CD8-positive, alpha-beta T cell (primary cell): ENCODE measurements at regions of chr3 and their contacts with region 1.

Region 1: GRCh38 chr3:58414538-58415197 is 19.0 kb downstream of the PDHB start:
- DNase-seq: peak in 6 of 9 experiments; percentile 23 to 72 (median 42)
- ATAC-seq: peak; percentile 91
- H3K4me3 ChIP-seq: no peak overlapping the region
- H3K4me3 Mint-ChIP-seq: no peak overlapping the region
- H3K27ac ChIP-seq: no peak overlapping the region
- H3K27ac Mint-ChIP-seq: no peak overlapping the region
- H3K4me1 ChIP-seq: no peaks in the 10 kb centered on the region
- H3K4me1 Mint-ChIP-seq: no peaks in the 10 kb centered on the region
- H3K27me3 ChIP-seq: no peaks in the 10 kb centered on the region
- H3K27me3 Mint-ChIP-seq: no peaks in the 10 kb centered on the region
- CTCF ChIP-seq: peak; percentile 60

Region 2: GRCh38 chr3:58324391-58325390 is 90.0 kb before region 1 on chr3:
- CTCF ChIA-PET with region 1: interaction called, 14 read pairs
- POLR2A ChIA-PET with region 1: no interaction called
- intact Hi-C with region 1: loop called (anchors 1 kb)
- DNase-seq: peak in 1 of 9 experiments; percentile 26
- ATAC-seq: peak; percentile 50
- H3K4me3 ChIP-seq: no peak overlapping the region
- H3K4me3 Mint-ChIP-seq: no peak overlapping the region
- H3K27ac ChIP-seq: no peak overlapping the region
- H3K27ac Mint-ChIP-seq: peak overlapping the region; percentile 52
- H3K4me1 ChIP-seq: peaks cover 7% of the 10 kb centered on the region
- H3K4me1 Mint-ChIP-seq: peaks cover 13% of the 10 kb centered on the region
- H3K27me3 ChIP-seq: no peaks in the 10 kb centered on the region
- H3K27me3 Mint-ChIP-seq: no peaks in the 10 kb centered on the region
- CTCF ChIP-seq: no peak